Activated CD4-positive, alpha-beta T cell treated with anti-CD3 and anti-CD28 coated beads, Interleukin-2, amount 10 ng/mL, durations not matched to agents 24 days and 14 days (primary cell): ENCODE measurements at regions of chr1 and their contacts with region 1.

Region 1: DNA sequence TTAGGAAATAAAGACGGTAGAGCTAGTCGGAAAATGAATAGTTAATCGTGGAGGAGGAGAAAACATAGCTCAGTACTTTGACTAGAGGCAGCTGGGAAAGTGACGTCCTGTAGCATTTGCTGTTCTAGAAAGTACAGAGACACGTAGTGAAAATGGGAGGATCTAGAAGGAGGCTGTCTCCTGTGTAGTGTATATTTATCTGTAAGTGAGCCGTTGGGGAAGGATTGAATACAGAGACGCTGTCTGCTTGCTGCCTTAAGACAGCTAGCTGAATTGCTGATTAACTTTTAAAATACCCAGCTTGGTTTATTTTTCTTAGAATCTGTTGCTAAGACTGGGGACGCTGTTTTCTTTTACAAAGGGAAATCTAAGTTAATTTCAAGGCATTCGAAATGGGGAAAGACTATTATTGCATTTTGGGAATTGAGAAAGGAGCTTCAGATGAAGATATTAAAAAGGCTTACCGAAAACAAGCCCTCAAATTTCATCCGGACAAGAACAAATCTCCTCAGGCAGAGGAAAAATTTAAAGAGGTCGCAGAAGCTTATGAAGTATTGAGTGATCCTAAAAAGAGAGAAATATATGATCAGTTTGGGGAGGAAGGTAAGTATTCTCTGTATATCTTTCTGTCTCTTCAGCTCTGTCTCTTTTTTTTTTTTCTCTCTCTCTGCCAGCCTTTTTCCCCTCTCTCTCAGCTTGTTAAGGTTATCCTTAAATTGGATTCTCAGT is at the start of gene DNAJB4:
- DNase-seq: peak; percentile 93
- H3K4me3 Mint-ChIP-seq: peak within 1 kb of the TSS; percentile 89
- H3K27ac Mint-ChIP-seq: peak within 1 kb of the TSS; percentile 98
- H3K4me1 Mint-ChIP-seq: peaks cover 29% of the 10 kb centered on the region
- H3K27me3 Mint-ChIP-seq: peaks cover 2% of the 10 kb centered on the region
- total RNA-seq, gene DNAJB4: 10.3 and 11.0 TPM in 2 replicates

Region 2: DNA sequence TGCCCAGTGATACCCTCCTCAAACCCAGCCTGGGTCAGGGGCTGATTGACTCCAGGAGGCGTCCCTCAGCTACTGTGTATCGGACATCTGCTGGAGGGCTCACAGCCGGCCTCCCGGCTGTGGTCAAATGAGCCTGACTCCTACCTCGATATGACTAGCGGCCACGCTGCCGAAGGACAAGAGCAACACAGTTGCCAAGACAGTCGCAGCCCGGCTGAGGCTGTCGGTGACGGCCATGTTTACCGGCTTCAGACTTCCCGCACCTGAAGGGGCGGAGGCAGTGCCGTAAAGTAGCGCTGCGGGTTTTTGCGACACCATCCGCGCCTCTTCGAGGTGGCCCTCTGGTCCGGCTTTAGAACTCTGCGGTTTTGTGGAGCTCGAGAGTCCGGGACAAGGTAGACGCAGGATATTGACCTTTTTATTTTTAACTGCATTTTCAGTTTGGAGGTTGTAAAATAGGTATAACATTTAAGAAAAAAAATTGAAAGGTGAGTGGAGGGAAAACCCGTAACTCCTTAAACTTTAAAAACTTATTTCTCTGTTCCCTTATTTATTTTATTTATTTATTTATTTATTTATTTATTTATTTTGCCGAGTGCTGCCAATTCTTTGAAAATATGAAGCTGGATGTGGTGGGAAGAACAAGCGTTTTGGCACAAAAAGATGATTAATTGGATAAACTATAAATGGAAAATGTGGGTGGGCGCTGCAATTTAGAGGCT is 785.6 kb before region 1 on chr1 and contains the start of gene PIGK:
- intact Hi-C with region 1: loop called (anchors 10 kb)
- DNase-seq: peak; percentile 97
- H3K4me3 Mint-ChIP-seq: peak within 1 kb of the TSS; percentile 94
- H3K27ac Mint-ChIP-seq: peak within 1 kb of the TSS; percentile 90
- H3K4me1 Mint-ChIP-seq: peaks cover 20% of the 10 kb centered on the region
- H3K27me3 Mint-ChIP-seq: no peaks in the 10 kb centered on the region
- total RNA-seq, gene PIGK: 19.3 and 20.3 TPM in 2 replicates

Region 3: DNA sequence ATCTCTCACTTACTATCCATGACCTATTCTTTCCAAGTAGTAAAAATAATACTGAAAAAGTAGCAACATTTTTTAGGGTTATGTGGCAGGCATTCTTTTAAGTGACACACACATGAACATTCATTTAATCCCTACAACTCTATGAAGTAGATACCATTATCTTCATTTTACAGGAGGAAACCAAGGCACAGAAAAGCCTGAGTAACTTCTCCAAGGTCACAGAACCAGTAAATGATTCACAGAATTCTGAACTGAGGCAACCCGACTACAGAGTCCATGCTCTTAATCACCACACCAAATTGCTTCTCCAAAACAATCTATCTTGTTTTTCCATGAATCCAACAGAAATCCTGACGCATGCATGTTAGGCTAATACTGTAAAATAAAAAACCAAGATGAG is 43.5 kb before region 1 on chr1:
- intact Hi-C with region 1: loop called (anchors 5 kb)
- DNase-seq: no peak
- H3K4me3 Mint-ChIP-seq: no peak overlapping the region
- H3K27ac Mint-ChIP-seq: peak overlapping the region; percentile 61
- H3K4me1 Mint-ChIP-seq: peaks cover 25% of the 10 kb centered on the region
- H3K27me3 Mint-ChIP-seq: no peaks in the 10 kb centered on the region

Region 4: DNA sequence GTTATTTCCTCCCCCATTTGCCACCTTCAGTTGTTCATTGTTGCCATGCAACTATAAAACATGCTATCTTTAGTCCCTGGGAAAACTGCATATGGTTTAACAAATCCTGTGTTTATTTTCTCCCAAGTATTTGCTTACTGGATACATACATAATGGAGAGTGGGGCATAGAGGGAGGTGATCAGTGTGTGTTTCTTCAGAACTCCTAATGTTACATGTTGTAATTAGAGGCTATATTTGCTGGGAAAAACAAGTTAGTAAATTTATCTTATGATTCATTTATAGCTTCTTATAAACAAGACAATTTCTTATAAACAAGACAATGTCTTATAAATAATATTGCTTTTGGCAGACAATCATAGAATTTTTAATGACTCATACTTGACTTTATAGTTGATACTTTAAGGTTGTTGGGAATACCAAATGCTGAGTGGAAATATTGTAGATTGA is 33.6 kb after region 1 on chr1:
- intact Hi-C with region 1: loop called (anchors 2 kb)
- DNase-seq: no peak
- H3K4me3 Mint-ChIP-seq: no peak overlapping the region
- H3K27ac Mint-ChIP-seq: no peak overlapping the region
- H3K4me1 Mint-ChIP-seq: peaks cover 7% of the 10 kb centered on the region
- H3K27me3 Mint-ChIP-seq: peaks cover 31% of the 10 kb centered on the region

Region 5: GRCh38 chr1:79042117-79042516 is 1037.2 kb after region 1 on chr1:
- intact Hi-C with region 1: loop called (anchors 5 kb)
- DNase-seq: no peak
- H3K4me3 Mint-ChIP-seq: no peak overlapping the region
- H3K27ac Mint-ChIP-seq: no peak overlapping the region
- H3K4me1 Mint-ChIP-seq: peaks cover 3% of the 10 kb centered on the region
- H3K27me3 Mint-ChIP-seq: no peaks in the 10 kb centered on the region